GM10248 (cell line): ENCODE measurements at regions of chr17 and their contacts with region 1.

Region 1: DNA sequence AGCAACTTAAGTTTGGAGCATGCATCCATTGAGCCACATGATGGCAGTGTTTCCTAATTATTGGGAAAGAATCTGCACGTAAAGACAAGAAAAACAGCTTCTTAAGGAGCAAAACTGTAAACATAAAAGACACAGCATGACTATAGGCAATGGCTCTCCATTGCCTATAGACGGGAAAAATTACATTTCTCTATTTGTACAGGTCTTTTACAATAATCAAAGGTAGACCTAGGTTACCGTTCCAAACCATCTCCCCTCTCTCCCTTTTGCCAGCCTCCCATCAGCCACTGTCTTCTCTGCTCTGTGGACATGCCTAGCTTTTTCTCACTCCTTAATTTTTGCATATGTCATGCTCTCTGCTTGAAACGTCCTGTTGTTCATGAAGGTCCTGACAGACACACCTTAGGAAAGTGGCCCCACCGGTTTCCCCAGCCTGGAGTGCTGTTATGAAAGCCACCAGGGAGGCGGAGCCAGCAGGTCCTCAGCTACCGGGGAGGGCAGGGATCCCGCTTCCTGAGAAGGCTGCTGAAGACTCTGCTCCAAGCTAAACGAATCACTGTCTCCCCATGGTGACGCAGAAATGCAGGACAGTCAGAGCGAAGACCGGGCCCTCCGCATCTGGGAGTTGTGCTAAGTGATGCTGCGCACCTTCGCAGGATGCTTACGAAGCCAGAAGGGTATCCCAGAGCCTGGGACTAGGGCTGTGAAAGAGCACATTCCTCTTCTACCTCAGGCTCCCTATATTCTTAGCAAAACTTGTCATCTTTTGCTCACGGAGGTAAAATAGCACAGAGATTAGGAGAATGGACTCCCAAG is 2.2 kb upstream of the SLC16A11 start:
- DNase-seq: peak; percentile 49
- CTCF ChIP-seq: peak; percentile 78

Region 2: GRCh38 chr17:7014261-7014994 is 31.7 kb before region 1 on chr17:
- CTCF ChIA-PET with region 1: interaction called, 16 read pairs
- POLR2A ChIA-PET with region 1: no interaction called
- DNase-seq: peak; percentile 92
- CTCF ChIP-seq: peak; percentile 83

Region 3: GRCh38 chr17:7035591-7036368 is 10.3 kb before region 1 on chr17 and contains the start of gene SLC16A13:
- CTCF ChIA-PET with region 1: interaction called, 26 read pairs
- POLR2A ChIA-PET with region 1: interaction called, 6 read pairs
- DNase-seq: peak; percentile 100
- CTCF ChIP-seq: no peak

Region 4: DNA sequence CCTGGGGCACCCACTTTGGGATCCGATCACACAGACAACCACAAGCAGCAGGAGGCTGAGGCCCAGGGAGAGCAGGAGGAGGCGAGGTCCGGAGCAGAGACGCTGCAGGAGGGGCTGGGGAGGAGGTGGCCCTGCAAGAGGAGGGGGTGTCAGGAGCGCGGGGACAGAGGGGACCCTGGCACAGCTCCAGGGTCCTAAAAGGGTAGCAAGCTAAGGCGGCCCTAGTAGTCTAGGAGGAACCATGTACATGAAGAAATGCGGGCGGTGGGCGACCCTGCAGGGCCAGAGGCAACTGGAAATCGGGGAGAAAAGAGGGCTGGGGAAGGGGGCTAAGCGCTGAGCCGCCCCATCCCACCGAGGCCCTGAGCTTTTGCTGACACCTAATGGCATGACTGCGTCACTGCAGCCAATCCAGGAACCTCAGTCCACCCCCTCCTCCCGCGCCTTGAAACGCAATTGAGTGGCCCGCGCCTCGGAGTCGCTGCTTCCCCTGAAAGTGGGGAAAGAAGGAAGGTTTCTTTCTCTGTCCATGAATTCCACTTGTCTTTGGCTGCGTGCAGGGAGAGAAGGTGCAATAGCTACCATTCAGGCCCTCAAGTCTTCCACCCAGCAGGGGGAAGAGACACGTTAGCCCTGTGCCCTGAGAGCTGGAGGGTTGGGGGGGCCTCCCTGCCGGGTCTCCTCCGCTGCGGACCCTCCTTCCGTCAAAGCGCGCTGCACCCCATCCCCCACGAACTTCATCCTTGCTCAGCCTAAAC is 131.3 kb after region 1 on chr17:
- CTCF ChIA-PET with region 1: interaction called, 38 read pairs
- POLR2A ChIA-PET with region 1: no interaction called
- DNase-seq: peak; percentile 87
- CTCF ChIP-seq: peak; percentile 90

Region 5: DNA sequence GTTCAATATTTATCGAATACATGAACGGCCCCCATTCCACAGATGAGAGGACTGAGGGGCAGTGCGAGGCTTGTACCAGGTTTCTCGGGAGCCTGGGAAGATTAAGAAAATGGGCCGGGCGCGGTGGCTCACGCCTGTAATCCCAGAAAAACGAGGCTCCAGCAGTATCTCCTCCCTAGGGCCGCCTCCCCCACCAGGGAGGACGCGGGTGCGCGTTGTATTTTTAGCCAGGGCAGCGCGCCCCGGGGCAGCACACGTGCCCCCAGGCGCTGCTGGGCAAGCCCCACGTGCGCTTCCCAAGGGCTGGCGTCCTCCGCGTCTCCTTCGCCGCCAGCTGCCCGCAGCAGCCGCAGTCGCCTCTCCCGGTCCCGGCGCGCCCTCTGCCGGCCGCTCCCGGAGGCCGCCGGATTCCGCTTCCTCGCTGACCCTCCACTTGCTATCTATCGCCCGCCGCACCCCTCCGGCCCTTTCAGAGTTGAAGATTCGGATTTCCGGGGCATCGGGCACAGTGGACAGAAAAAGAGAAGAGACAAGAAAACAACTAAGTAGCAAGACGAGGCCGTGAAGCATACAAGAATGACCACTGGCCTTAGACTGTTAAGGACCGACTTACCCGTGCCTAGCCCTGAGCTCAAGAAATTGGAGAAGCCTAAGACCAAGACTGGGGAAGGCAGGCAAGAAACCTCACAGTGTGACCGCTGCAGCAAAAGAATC is 250.2 kb after region 1 on chr17:
- CTCF ChIA-PET with region 1: interaction called, 29 read pairs
- POLR2A ChIA-PET with region 1: no interaction called
- DNase-seq: peak; percentile 87
- CTCF ChIP-seq: peak; percentile 93

Region 6: GRCh38 chr17:7383742-7384488 is 337.8 kb after region 1 on chr17:
- CTCF ChIA-PET with region 1: no interaction called
- POLR2A ChIA-PET with region 1: no interaction called
- DNase-seq: peak; percentile 93
- CTCF ChIP-seq: no peak